ENCODE measurements at regions of chr19 and their contacts with region 1.

Region 1: DNA sequence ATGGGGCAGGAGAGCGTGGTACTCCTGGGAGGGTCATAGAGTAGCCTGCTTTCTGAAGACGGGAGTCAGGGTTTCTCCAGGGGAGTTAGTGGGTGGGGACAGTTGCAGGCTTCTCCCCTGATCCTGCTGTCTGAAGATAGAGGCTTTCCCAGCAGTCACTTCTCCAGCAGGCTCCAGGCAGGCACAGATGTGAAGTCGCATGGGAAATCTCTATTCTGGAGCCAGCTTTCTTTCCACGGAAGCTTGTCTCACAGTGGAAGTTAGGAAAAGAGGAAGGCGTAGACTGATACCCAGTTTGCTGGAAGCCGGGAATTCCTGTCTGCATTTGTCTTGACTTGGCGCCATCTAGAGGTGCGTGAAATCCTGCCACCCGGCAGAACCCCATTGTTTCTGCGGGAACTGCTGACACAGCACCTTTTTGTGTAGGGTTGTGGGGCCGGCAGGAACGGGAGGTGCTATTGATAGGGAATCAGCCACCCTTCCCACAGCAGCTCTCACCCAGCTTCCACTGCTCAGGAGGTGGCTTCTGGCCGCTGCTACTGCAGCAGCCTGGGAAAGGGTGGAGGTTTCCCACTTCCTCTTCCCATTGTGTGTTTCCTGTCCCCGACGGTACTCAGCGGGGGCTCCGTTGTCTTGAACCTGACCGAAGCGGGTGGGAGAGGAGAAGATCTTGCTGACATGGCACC is 28.5 kb upstream of the NPAS1 start:
- DNase-seq: peak; percentile 85 to 90 (median 88)
- ATAC-seq: peak; percentile 62 to 80 (median 67)
- H3K4me3 ChIP-seq: peak overlapping the region in 3 of 12 donors; percentile 5 to 29 (median 18)
- H3K27ac ChIP-seq: peak overlapping the region; percentile 53 to 88 (median 78)
- H3K4me1 ChIP-seq: peaks cover 8 to 85% (median 51%) of the 10 kb centered on the region in 12 donors
- H3K27me3 ChIP-seq: no peaks in the 10 kb centered on the region
- CTCF ChIP-seq: peak; percentile 70 to 97 (median 86)
- POLR2A ChIP-seq: no peak

Region 2: GRCh38 chr19:46746281-46747013 is 244.7 kb before region 1 on chr19 and contains the start of gene STRN4:
- intact Hi-C with region 1: loop called in 4 of 10 experiments (anchors 10 kb)
- DNase-seq: peak in 3 of 5 donors; percentile 61 to 71 (median 67)
- ATAC-seq: peak; percentile 44 to 83 (median 65)
- H3K4me3 ChIP-seq: peak within 1 kb of the TSS; percentile 82 to 100 (median 96)
- H3K27ac ChIP-seq: peak within 1 kb of the TSS; percentile 83 to 97 (median 90)
- H3K4me1 ChIP-seq: peaks cover 0 to 48% (median 28%) of the 10 kb centered on the region in 12 donors
- H3K27me3 ChIP-seq: no peaks in the 10 kb centered on the region
- CTCF ChIP-seq: no peak
- POLR2A ChIP-seq: no peak
- total RNA-seq, gene STRN4: 41.0 to 93.6 (median 53.7) TPM

Region 3: DNA sequence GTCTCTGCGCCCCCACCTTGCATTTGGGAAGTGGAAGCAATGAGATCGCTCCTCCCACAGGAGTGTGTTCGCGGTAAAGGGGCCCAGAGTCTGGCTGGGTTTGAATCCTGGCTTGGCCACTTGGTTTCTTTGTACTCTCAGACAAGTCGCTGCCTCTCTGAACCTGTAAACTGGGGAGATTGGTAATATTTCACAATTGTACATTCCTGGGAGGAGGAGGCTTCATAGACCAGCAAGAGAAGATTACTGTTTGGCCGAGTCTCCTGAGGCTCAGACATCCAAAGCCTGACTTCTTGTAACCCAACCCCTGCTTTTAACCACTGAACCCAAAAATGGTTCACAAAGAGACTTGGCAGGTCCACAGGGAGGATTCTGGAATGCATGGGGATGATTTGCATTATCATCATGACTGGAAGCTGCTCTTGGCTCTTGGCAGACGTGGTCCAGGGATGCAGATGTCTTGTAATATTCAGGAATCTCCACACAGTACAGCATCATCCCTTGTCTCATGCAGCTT is 231.3 kb before region 1 on chr19:
- intact Hi-C with region 1: loop called in 7 of 10 experiments (anchors 5 to 10 kb)
- DNase-seq: no peak
- ATAC-seq: no peak
- H3K4me3 ChIP-seq: no peak overlapping the region
- H3K27ac ChIP-seq: peak overlapping the region in 2 of 12 donors; percentile 42 to 49
- H3K4me1 ChIP-seq: peaks cover 0 to 37% (median 6%) of the 10 kb centered on the region in 12 donors
- H3K27me3 ChIP-seq: no peaks in the 10 kb centered on the region
- CTCF ChIP-seq: no peak
- POLR2A ChIP-seq: no peak

Region 4: DNA sequence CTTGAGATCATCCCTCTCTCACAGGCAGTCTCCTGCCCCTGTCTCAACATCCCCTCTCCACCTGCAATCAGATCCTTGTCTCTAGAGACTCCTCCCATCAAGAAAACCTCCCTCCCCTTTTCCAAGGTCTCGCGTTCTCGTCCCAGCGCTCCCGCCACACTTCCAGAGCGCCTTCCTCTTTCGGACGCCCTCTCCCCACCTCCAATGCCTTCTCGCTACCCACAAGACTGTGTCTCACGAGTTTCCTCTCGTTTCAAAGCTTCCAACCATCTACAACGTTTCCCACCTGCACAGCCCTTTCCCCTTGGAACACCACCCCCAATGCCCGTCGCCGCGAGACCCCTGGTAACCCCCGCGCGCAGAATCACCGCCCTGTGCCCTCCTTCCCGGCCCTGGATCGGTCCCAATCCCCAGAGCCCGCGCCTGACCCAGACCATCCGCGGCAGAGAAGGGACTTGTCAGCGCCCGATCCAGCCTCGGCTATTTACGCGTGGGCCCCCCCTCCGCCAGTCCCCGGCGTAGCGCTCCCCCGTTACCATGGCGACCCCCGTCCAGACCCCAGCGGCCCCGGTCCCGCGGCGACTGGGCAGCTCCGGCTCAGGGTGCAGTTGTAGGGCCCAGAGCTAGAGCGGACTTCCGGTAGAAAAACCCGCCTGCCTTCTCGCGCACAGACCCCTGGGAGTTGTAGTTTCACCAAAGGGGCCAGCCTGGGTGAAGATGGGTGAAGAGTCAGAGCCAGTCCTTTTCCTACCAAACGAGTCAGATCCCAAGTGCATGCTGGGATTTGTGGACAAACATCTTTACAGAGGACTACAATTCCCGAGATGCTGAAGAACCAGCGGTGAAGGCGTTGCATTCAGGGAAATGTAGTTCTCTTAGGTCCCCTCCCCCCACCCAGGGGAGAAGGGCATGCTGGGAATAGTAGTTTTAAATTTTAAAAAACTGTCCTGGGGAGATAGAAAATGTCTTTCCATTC is 140.6 kb before region 1 on chr19 and contains the start of gene AP2S1:
- intact Hi-C with region 1: loop called in 1 of 10 experiments (anchors 5 kb)
- DNase-seq: peak; percentile 93 to 97 (median 97)
- ATAC-seq: peak; percentile 92 to 97 (median 96)
- H3K4me3 ChIP-seq: peak within 1 kb of the TSS; percentile 66 to 97 (median 79)
- H3K27ac ChIP-seq: peak within 1 kb of the TSS; percentile 40 to 92 (median 86)
- H3K4me1 ChIP-seq: peaks cover 0 to 32% (median 12%) of the 10 kb centered on the region in 12 donors
- H3K27me3 ChIP-seq: no peaks in the 10 kb centered on the region
- CTCF ChIP-seq: peak in 1 of 12 donors; percentile 17
- POLR2A ChIP-seq: peak in 1 of 2 donors; percentile 78
- total RNA-seq, gene AP2S1: 75.3 to 148 (median 84.5) TPM

Region 5: GRCh38 chr19:46924874-46925547 is 66.1 kb before region 1 on chr19:
- intact Hi-C with region 1: loop called in 3 of 10 experiments (anchors 2 to 5 kb)
- DNase-seq: peak in 3 of 5 donors; percentile 24 to 43 (median 42)
- ATAC-seq: peak in 3 of 4 donors; percentile 49 to 85 (median 73)
- H3K4me3 ChIP-seq: no peak overlapping the region
- H3K27ac ChIP-seq: peak overlapping the region in 11 of 12 donors; percentile 11 to 72 (median 56)
- H3K4me1 ChIP-seq: peaks cover 16 to 66% (median 53%) of the 10 kb centered on the region in 12 donors
- H3K27me3 ChIP-seq: no peaks in the 10 kb centered on the region
- CTCF ChIP-seq: no peak
- POLR2A ChIP-seq: no peak

Measured in heart left ventricle (tissue), 16 donors.